Thyroid gland (tissue), 4 donors: ENCODE measurements at regions of chr7 and their contacts with region 1.

Region 1: GRCh38 chr7:30134611-30135545 is at the start of gene MTURN:
- DNase-seq: peak; percentile 82 to 85
- H3K4me3 ChIP-seq: peak within 1 kb of the TSS; percentile 49 to 80 (median 73)
- H3K27ac ChIP-seq: peak within 1 kb of the TSS; percentile 81 to 89 (median 81)
- H3K4me1 ChIP-seq: peaks cover 5 to 18% of the 10 kb centered on the region in 2 donors
- H3K27me3 ChIP-seq: no peaks in the 10 kb centered on the region
- CTCF ChIP-seq: peak in 2 of 6 experiments; percentile 2 to 27
- POLR2A ChIP-seq: peak; percentile 42 to 82
- total RNA-seq, gene MTURN: 32.0 to 86.3 (median 44.0) TPM

Region 2: DNA sequence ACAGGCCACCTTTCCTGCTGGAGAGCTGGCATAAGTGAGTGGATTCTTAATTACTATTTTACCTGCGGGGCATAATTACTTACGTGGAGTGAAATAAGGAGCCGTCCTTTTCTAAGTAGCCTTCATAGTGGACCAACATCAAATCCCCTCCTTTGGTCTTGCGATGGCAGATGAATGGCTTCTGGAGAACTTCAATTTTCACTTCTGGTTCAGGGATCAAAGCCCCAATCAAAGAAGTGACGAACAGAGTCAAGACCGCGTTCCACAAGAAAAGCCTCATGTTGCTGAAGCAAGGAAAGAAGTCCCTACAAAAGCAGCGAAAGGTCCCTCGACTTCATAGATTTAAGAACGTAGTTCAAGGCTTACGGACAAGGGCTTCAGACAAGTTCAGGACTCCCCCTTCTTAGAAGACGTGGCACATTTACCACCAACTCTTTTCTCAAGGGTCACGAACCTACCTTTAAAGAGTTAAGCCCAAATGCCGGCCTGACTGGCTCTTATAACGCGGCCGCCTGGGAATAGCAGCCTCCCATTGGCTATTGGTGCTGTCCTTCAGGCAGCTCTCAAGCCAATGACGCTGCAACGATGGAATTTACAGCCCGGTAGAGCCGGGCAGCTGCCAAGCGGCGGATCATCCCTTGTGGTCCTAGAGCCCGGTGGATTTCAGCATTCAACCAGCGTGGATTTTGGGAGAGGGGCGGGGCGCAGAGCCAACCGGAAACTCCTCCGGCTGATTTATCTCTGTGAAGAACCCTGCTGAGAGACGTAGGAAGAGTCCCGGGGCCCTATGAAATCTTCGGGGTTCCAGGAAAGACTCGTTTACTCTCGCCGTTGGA is 108.4 kb before region 1 on chr7 and contains the start of gene FKBP14:
- intact Hi-C with region 1: loop called (anchors 10 kb)
- DNase-seq: peak; percentile 98
- H3K4me3 ChIP-seq: peak within 1 kb of the TSS in 2 of 3 donors; percentile 83 to 89
- H3K27ac ChIP-seq: peak within 1 kb of the TSS; percentile 19 to 71 (median 69)
- H3K4me1 ChIP-seq: peaks cover 23 to 26% of the 10 kb centered on the region in 2 donors
- H3K27me3 ChIP-seq: no peaks in the 10 kb centered on the region
- CTCF ChIP-seq: peak in 1 of 6 experiments; percentile 17
- POLR2A ChIP-seq: peak in 1 of 2 donors; percentile 37
- total RNA-seq, gene FKBP14: 5.2 to 11.7 (median 6.6) TPM